IMR-90 (cell line): ENCODE measurements at regions of chr12 and their contacts with region 1.

Region 1: GRCh38 chr12:16307821-16308475 is 30.5 kb upstream of the SLC15A5 start:
- DNase-seq: no peak
- ATAC-seq: no peak
- H3K4me3 ChIP-seq: no peak overlapping the region
- H3K27ac ChIP-seq: no peak overlapping the region
- H3K4me1 ChIP-seq: no peaks in the 10 kb centered on the region
- H3K27me3 ChIP-seq: no peaks in the 10 kb centered on the region
- CTCF ChIP-seq: no peak
- POLR2A ChIP-seq: no peak
- RAD21 ChIP-seq: no peak

Region 2: GRCh38 chr12:16272222-16272621 is 35.7 kb before region 1 on chr12:
- CTCF ChIA-PET with region 1: no interaction called
- POLR2A ChIA-PET with region 1: interaction called, 14 read pairs
- dilution Hi-C with region 1: no loop called
- in situ Hi-C with region 1: no loop called
- intact Hi-C with region 1: no loop called
- DNase-seq: peak; percentile 2
- ATAC-seq: no peak
- H3K4me3 ChIP-seq: no peak overlapping the region
- H3K27ac ChIP-seq: no peak overlapping the region
- H3K4me1 ChIP-seq: no peaks in the 10 kb centered on the region
- H3K27me3 ChIP-seq: no peaks in the 10 kb centered on the region; the same call in 1 of the 2 replicates
- CTCF ChIP-seq: no peak
- POLR2A ChIP-seq: no peak
- RAD21 ChIP-seq: no peak

Region 3: GRCh38 chr12:16349131-16349460 is 41.1 kb after region 1 on chr12:
- CTCF ChIA-PET with region 1: no interaction called
- POLR2A ChIA-PET with region 1: no interaction called
- dilution Hi-C with region 1: no loop called
- in situ Hi-C with region 1: no loop called
- intact Hi-C with region 1: no loop called
- DNase-seq: peak; percentile 96
- ATAC-seq: peak; percentile 46
- H3K4me3 ChIP-seq: peak overlapping the region; percentile 93
- H3K27ac ChIP-seq: peak overlapping the region; percentile 98
- H3K4me1 ChIP-seq: peaks cover 9% of the 10 kb centered on the region
- H3K27me3 ChIP-seq: no peaks in the 10 kb centered on the region
- CTCF ChIP-seq: no peak
- POLR2A ChIP-seq: peak; percentile 68
- RAD21 ChIP-seq: 0 out of 2 replicates have a peak, but pooled peaks have one; percentile 10